ENCODE measurements at regions of chr3 and their contacts with region 1.

Region 1: GRCh38 chr3:52154117-52155094 is at the start of gene POC1A:
- DNase-seq: peak; percentile 91
- ATAC-seq: peak; percentile 85
- H3K4me3 ChIP-seq: peak within 1 kb of the TSS; percentile 73 to 93 (median 92)
- H3K4me3 Mint-ChIP-seq: peak within 1 kb of the TSS; percentile 98
- H3K27ac ChIP-seq: peak within 1 kb of the TSS; percentile 79 to 81
- H3K27ac Mint-ChIP-seq: peak within 1 kb of the TSS; percentile 98
- H3K4me1 ChIP-seq: peaks cover 4 to 15% of the 10 kb centered on the region in 2 donors
- H3K4me1 Mint-ChIP-seq: peaks cover 14% of the 10 kb centered on the region
- H3K27me3 ChIP-seq: no peaks in the 10 kb centered on the region
- H3K27me3 Mint-ChIP-seq: no peaks in the 10 kb centered on the region
- CTCF ChIP-seq: peak; percentile 13
- total RNA-seq, gene POC1A: 2.4 and 2.8 TPM in 2 replicates

Region 2: GRCh38 chr3:51995346-51996163 is 158.9 kb before region 1 on chr3 and contains the start of gene RPL29:
- CTCF ChIA-PET with region 1: interaction called, 166 read pairs
- POLR2A ChIA-PET with region 1: interaction called, 12 read pairs
- intact Hi-C with region 1: loop called (anchors 1 kb)
- DNase-seq: peak; percentile 95
- ATAC-seq: peak; percentile 98
- H3K4me3 ChIP-seq: peak within 1 kb of the TSS; percentile 89 to 99 (median 94)
- H3K4me3 Mint-ChIP-seq: peak within 1 kb of the TSS; percentile 100
- H3K27ac ChIP-seq: peak within 1 kb of the TSS; percentile 87 to 91
- H3K27ac Mint-ChIP-seq: peak within 1 kb of the TSS; percentile 100
- H3K4me1 ChIP-seq: peaks cover 13 to 19% of the 10 kb centered on the region in 2 donors
- H3K4me1 Mint-ChIP-seq: peaks cover 33% of the 10 kb centered on the region
- H3K27me3 ChIP-seq: no peaks in the 10 kb centered on the region
- H3K27me3 Mint-ChIP-seq: peaks cover 6% of the 10 kb centered on the region
- CTCF ChIP-seq: no peak
- total RNA-seq, gene RPL29: 1,460 and 1,552 TPM in 2 replicates

Region 3: GRCh38 chr3:52001443-52001974 is 152.9 kb before region 1 on chr3:
- CTCF ChIA-PET with region 1: interaction called, 166 read pairs
- POLR2A ChIA-PET with region 1: no interaction called
- intact Hi-C with region 1: loop called (anchors 1 kb)
- DNase-seq: peak; percentile 91
- ATAC-seq: peak; percentile 99
- H3K4me3 ChIP-seq: no peak overlapping the region
- H3K4me3 Mint-ChIP-seq: no peak overlapping the region
- H3K27ac ChIP-seq: no peak overlapping the region
- H3K27ac Mint-ChIP-seq: peak overlapping the region; percentile 37
- H3K4me1 ChIP-seq: peaks cover 6 to 13% of the 10 kb centered on the region in 2 donors
- H3K4me1 Mint-ChIP-seq: peaks cover 5% of the 10 kb centered on the region
- H3K27me3 ChIP-seq: no peaks in the 10 kb centered on the region
- H3K27me3 Mint-ChIP-seq: peaks cover 6% of the 10 kb centered on the region
- CTCF ChIP-seq: peak; percentile 90

Region 4: GRCh38 chr3:52197842-52198668 is 43.6 kb after region 1 on chr3 and contains the start of gene ALAS1:
- CTCF ChIA-PET with region 1: no interaction called
- POLR2A ChIA-PET with region 1: interaction called, 4 read pairs
- intact Hi-C with region 1: loop called (anchors 1 kb)
- DNase-seq: peak; percentile 96
- ATAC-seq: peak; percentile 96
- H3K4me3 ChIP-seq: peak within 1 kb of the TSS; percentile 9 to 90 (median 86)
- H3K4me3 Mint-ChIP-seq: peak within 1 kb of the TSS; percentile 92
- H3K27ac ChIP-seq: peak within 1 kb of the TSS; percentile 41 to 79
- H3K27ac Mint-ChIP-seq: peak within 1 kb of the TSS; percentile 90
- H3K4me1 ChIP-seq: peaks cover 19 to 33% of the 10 kb centered on the region in 2 donors
- H3K4me1 Mint-ChIP-seq: peaks cover 42% of the 10 kb centered on the region
- H3K27me3 ChIP-seq: no peaks in the 10 kb centered on the region
- H3K27me3 Mint-ChIP-seq: no peaks in the 10 kb centered on the region
- CTCF ChIP-seq: no peak
- total RNA-seq, gene ALAS1: 26.1 and 28.3 TPM in 2 replicates

Measured in B cell (primary cell).